ENCODE measurements at regions of chr5 and their contacts with region 1.

Region 1: GRCh38 chr5:170338933-170339779 is 41.6 kb upstream of the LCP2 start:
- DNase-seq: peak; percentile 74
- H3K4me3 Mint-ChIP-seq: no peak overlapping the region
- H3K27ac Mint-ChIP-seq: no peak overlapping the region
- H3K4me1 Mint-ChIP-seq: peaks cover 33% of the 10 kb centered on the region
- H3K27me3 Mint-ChIP-seq: no peaks in the 10 kb centered on the region

Region 2: DNA sequence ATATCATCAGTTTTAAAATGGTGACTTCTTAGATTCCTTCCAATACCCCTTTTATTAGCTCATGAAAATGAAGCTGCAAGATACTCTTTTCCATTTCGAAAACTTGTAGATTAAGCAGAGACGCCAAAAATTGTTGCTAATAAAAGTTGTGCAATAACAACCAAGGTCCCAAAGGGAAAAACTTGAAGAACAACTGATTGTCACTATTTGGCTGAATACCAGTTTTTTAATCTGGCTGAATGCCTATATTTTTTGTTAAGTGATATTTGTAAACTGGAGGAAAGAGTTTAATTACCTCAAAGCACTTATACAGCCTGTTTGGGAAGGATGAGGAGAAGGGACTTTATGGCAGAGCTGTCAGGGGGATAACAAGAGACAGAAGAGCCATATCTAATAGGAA is 91.8 kb before region 1 on chr5:
- CTCF ChIA-PET with region 1: interaction called, 13 read pairs
- POLR2A ChIA-PET with region 1: interaction called, 8 read pairs
- DNase-seq: no peak
- H3K4me3 Mint-ChIP-seq: no peak overlapping the region
- H3K27ac Mint-ChIP-seq: no peak overlapping the region
- H3K4me1 Mint-ChIP-seq: peaks cover 23% of the 10 kb centered on the region
- H3K27me3 Mint-ChIP-seq: no peaks in the 10 kb centered on the region

Region 3: DNA sequence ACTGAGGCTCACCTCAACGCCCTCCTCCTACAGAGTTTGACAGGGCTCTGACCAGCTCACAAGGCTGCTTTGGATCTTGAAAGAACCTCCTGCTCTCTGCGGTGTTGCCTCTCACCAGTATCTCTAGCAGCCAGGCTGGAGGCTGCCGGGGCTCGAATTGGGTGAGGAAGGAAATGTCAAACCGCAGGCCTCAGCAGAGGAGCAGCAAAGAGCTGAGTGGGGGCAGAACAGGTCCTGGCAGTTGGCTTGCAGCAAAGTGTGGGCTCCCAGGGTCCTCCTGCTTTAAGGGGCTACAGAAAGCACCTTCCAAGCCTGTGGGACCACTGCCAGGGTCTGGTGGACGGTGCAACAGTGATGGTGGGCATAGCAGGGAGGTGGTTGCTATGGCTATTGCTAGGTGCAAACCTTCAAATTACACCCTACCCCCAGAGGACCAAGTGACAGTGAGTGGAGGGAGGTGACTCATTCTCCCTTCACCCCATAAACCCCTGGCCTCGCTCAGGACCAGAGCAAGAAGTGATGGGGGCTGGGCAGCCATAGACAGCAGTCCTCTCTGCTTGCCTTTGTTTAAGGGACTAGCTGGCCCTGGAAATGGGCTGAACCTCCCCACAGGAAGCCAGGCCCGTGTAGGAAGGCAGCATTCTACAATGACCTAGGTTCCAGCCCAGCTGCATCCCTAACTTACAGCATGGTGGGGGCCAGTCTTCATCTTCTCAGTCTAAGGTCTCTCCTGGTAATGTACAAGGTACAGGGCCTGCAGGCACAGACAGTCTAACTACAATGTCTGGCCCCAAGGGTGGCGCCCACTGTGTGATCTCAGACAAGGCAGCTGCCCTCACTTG is 60.3 kb before region 1 on chr5:
- CTCF ChIA-PET with region 1: interaction called, 109 read pairs
- POLR2A ChIA-PET with region 1: interaction called, 290 read pairs
- DNase-seq: peak; percentile 94
- H3K4me3 Mint-ChIP-seq: peak overlapping the region; percentile 69
- H3K27ac Mint-ChIP-seq: peak overlapping the region; percentile 97
- H3K4me1 Mint-ChIP-seq: peaks cover 97% of the 10 kb centered on the region
- H3K27me3 Mint-ChIP-seq: no peaks in the 10 kb centered on the region

Region 4: DNA sequence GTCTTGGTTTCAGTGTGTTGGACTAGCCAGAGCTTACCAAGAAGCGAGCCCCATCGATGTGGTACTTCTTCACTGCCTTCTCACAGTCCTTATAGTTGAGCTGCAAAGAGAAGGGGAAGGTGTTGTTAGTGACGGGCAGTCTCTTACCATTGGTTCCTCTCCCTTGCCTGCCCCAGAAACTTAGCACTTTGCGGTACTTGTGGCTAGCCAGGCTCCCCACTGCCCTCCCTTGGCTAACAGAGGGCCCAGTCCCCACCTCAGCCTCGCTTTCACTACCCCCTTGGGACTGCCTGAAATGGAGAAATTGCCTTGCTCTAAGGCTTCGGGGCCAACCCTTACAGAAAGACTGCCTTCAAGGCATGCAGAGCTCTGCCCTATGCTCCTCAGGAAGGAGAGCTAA is 45.9 kb before region 1 on chr5:
- CTCF ChIA-PET with region 1: interaction called, 76 read pairs
- POLR2A ChIA-PET with region 1: interaction called, 375 read pairs
- DNase-seq: peak; percentile 80
- H3K4me3 Mint-ChIP-seq: peak overlapping the region; percentile 99
- H3K27ac Mint-ChIP-seq: peak overlapping the region; percentile 96
- H3K4me1 Mint-ChIP-seq: peaks cover 70% of the 10 kb centered on the region
- H3K27me3 Mint-ChIP-seq: no peaks in the 10 kb centered on the region